BJ (cell line): ENCODE measurements at regions of chr7 and their contacts with region 1.

Region 1: GRCh38 chr7:81457852-81458522 is 311.9 kb downstream of the HGF start:
- DNase-seq: no peak
- H3K4me3 ChIP-seq: no peak overlapping the region
- H3K27me3 ChIP-seq: no peaks in the 10 kb centered on the region
- CTCF ChIP-seq: peak; percentile 43

Region 2: GRCh38 chr7:80699045-80699638 is 758.8 kb before region 1 on chr7:
- CTCF ChIA-PET with region 1: interaction called, 22 read pairs
- POLR2A ChIA-PET with region 1: no interaction called
- DNase-seq: no peak
- H3K4me3 ChIP-seq: no peak overlapping the region
- H3K27me3 ChIP-seq: no peaks in the 10 kb centered on the region
- CTCF ChIP-seq: peak; percentile 46

Region 3: DNA sequence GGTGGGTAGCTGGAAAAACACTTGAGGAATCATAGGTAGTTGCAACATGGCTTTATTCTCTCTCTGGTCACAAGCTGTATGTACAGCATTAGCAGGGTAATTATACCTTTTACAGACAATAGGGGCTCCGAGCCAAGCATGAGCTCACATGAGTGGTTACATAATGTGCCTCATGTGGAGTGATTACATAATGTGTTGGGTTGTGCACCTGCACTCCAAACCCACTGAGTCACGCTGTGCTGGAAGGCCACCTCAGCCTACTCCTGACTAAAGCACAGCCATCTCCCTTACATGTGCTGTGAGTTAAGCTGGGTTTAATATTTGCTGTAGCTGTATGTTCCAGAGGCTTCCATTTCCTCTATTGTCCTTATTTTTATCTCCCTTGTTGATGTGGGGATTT is 190.5 kb before region 1 on chr7:
- CTCF ChIA-PET with region 1: no interaction called
- POLR2A ChIA-PET with region 1: no interaction called
- DNase-seq: no peak
- H3K4me3 ChIP-seq: no peak overlapping the region
- H3K27me3 ChIP-seq: no peaks in the 10 kb centered on the region
- CTCF ChIP-seq: no peak